ENCODE measurements at regions of chr19 and their contacts with region 1.

Region 1: DNA sequence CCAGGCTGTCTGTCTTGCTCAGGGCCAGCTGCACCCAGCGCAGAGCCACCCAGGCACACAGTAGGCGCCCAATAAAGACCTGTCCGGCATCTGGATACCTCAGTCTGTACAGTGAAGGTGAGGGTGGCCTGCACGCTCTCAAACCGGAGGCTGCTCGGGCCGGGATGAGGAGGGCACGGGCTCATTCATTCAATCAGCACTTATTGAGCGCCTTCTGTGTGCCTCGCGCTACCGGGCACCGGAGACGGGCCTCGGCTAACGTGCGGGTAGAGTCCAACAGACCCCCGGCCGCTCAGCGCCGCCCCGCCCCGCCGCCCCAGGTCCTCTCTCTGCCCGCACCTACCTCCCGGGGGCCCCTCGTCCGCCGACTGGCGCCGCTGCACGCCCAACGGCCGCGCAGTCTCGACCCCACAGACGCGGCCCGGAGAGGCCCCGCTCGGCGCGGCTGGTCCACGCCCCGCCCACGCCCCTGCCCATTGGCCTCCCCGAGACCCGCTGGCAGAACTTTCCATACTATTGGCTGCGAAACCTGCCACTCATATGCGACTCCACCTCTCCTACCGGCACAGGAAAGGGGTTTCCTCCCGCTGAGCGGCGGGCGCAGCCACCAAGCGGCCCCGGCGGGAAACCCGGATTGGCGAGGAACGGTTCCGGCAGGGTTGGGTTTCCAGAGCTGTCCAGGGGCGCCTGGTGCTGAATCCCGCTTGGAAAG is at the start of gene SLC39A3:
- DNase-seq: peak; percentile 98 to 99
- ATAC-seq: peak; percentile 99
- H3K4me3 ChIP-seq: peak within 1 kb of the TSS; percentile 81 to 91
- H3K27ac ChIP-seq: no peak within 1 kb of the TSS
- H3K4me1 ChIP-seq: no peaks in the 10 kb centered on the region
- H3K27me3 ChIP-seq: no peaks in the 10 kb centered on the region
- total RNA-seq, gene SLC39A3: 13.6 to 14.1 TPM

Region 2: GRCh38 chr19:2702162-2703076 is 37.3 kb before region 1 on chr19 and contains the start of gene GNG7:
- intact Hi-C with region 1: loop called in 1 of 2 experiments (anchors 5 kb)
- DNase-seq: peak; percentile 96 to 97
- ATAC-seq: peak; percentile 97
- H3K4me3 ChIP-seq: peak within 1 kb of the TSS; percentile 11 to 14
- H3K27ac ChIP-seq: no peak within 1 kb of the TSS
- H3K4me1 ChIP-seq: no peaks in the 10 kb centered on the region
- H3K27me3 ChIP-seq: no peaks in the 10 kb centered on the region
- total RNA-seq, gene GNG7: 2.4 to 6.0 TPM

Measured in aorta (tissue), 5 donors.